Activated naive CD8-positive, alpha-beta T cell treated with anti-CD3 and anti-CD28 coated beads, Interleukin-2, amount 10 ng/mL, durations not matched to agents 7 days and 5 days (primary cell): ENCODE measurements at regions of chr12 and their contacts with region 1.

Region 1: GRCh38 chr12:116277393-116278278 is at the start of gene MED13L:
- DNase-seq: peak; percentile 95
- ATAC-seq: peak; percentile 81
- H3K4me3 Mint-ChIP-seq: peak within 1 kb of the TSS; percentile 91
- H3K27ac Mint-ChIP-seq: peak within 1 kb of the TSS; percentile 95
- H3K4me1 Mint-ChIP-seq: peaks cover 31% of the 10 kb centered on the region
- H3K27me3 Mint-ChIP-seq: no peaks in the 10 kb centered on the region
- total RNA-seq, gene MED13L: 112 to 120 TPM

Region 2: DNA sequence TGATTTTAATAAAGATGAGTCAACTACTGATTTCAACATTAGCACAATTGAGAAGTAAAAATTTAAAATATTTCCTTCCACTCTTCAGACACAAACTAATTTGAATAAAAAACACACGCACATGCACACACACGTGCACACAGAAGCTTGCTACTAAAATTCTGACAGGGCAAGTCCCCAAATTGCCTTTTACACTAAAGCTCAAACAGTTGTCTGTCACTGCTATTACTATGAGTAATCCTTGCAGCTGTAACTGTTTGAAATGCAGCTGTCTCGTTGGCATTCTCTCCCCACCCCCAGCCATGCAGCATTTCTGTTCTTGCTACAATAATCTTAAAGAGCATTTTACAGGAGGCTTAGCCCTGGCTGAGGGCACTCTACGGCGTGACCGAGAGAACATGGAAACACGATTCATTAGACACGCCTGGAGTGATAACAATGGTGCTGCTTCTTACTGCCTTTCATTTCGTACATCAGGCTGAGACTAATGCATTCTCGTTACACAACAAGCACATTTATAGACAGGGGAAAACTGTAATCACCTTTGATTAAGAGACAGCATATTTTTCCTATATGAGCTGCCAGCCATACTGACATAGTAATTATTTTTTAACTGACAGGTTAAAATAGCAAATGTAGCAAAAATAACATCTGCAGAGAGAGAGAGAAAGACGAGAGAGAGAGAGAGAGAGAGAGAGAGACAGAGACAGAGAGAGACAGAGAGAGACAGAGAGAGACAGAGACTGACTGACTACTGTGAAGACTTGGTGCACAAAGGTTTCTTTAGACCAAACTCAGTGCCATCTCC is 154.0 kb before region 1 on chr12:
- POLR2A ChIA-PET with region 1: no interaction called
- DNase-seq: no peak
- ATAC-seq: no peak
- H3K4me3 Mint-ChIP-seq: no peak overlapping the region
- H3K27ac Mint-ChIP-seq: no peak overlapping the region
- H3K4me1 Mint-ChIP-seq: peaks cover 25% of the 10 kb centered on the region
- H3K27me3 Mint-ChIP-seq: no peaks in the 10 kb centered on the region

Region 3: GRCh38 chr12:116325336-116325664 is 47.7 kb after region 1 on chr12:
- POLR2A ChIA-PET with region 1: interaction called, 15 read pairs
- DNase-seq: no peak
- ATAC-seq: peak; percentile 98
- H3K4me3 Mint-ChIP-seq: peak overlapping the region; percentile 62
- H3K27ac Mint-ChIP-seq: peak overlapping the region; percentile 88
- H3K4me1 Mint-ChIP-seq: peaks cover 29% of the 10 kb centered on the region
- H3K27me3 Mint-ChIP-seq: no peaks in the 10 kb centered on the region